Naive thymus-derived CD8-positive, alpha-beta T cell (primary cell): ENCODE measurements at regions of chr19 and their contacts with region 1.

Region 1: DNA sequence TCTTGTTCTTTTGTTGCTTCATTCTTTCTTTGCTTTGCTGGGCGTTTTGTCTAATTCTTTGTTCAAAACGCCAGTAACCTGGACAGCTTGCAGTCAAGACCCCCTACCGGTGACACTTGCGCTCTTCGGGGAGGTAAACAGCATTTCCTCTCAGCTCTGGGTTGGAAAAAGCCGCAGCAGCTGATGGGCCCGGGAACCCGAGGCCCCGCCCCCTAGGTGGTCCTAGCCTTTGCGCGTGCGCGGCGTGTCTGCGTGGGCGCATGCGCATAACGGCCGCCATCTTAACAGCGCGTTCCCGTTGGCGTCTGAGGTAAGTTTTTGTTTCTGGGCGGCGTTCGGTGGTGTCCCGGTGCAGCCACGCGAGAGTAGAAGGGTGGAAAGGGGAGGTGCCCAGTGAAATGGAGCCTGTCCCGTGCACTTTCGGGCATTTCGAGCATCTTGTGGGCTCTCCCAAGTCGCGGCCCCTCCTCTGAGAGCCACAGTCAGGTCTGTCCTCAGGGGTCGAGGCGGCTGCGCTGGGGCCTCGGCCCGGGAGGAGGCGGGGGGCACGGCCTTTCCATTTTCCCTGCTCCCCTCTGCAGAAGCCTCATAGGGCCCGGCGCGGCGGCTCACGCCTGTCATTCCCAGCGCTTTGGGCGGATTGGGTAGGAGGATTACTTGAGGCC is at the start of gene ZNF559:
- DNase-seq: peak; percentile 95 to 99 (median 98)
- ATAC-seq: peak; percentile 96
- H3K4me3 Mint-ChIP-seq: peak within 1 kb of the TSS; percentile 90 to 98 (median 94)
- H3K27ac Mint-ChIP-seq: peak within 1 kb of the TSS; percentile 93 to 98 (median 96)
- H3K4me1 Mint-ChIP-seq: peaks cover 11 to 38% (median 28%) of the 10 kb centered on the region in 4 donors
- H3K27me3 Mint-ChIP-seq: no peaks in the 10 kb centered on the region
- polyA plus RNA-seq, gene ZNF559: 37.2 to 55.4 (median 45.1) TPM

Region 2: DNA sequence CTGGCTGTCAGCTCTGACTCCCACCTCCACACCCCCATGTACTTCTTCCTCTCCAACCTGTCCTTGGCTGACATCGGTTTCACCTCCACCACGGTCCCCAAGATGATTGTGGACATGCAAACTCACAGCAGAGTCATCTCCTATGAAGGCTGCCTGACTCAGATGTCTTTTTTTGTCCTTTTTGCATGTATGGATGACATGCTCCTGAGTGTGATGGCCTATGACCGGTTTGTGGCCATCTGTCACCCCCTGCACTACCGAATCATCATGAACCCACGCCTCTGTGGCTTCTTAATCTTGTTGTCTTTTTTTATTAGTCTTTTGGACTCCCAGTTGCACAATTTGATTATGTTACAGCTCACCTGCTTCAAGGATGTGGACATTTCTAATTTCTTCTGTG is 72.8 kb before region 1 on chr19:
- POLR2A ChIA-PET with region 1: no interaction called
- DNase-seq: no peak
- ATAC-seq: no peak
- H3K4me3 Mint-ChIP-seq: no peak overlapping the region
- H3K27ac Mint-ChIP-seq: no peak overlapping the region
- H3K4me1 Mint-ChIP-seq: no peaks in the 10 kb centered on the region
- H3K27me3 Mint-ChIP-seq: peaks cover 8 to 30% (median 13%) of the 10 kb centered on the region in 5 donors

Region 3: GRCh38 chr19:9309139-9309973 is 14.7 kb before region 1 on chr19 and contains the start of gene ZNF699:
- POLR2A ChIA-PET with region 1: interaction called, 32 read pairs
- DNase-seq: peak; percentile 96 to 100 (median 98)
- ATAC-seq: peak; percentile 86 to 90
- H3K4me3 Mint-ChIP-seq: peak within 1 kb of the TSS; percentile 92 to 98 (median 95)
- H3K27ac Mint-ChIP-seq: peak within 1 kb of the TSS; percentile 89 to 99 (median 96)
- H3K4me1 Mint-ChIP-seq: peaks cover 6 to 43% (median 34%) of the 10 kb centered on the region in 4 donors
- H3K27me3 Mint-ChIP-seq: peaks cover 0 to 2% (median 0%) of the 10 kb centered on the region in 5 donors
- polyA plus RNA-seq, gene ZNF699: 6.9 to 30.0 (median 8.8) TPM

Region 4: GRCh38 chr19:9435279-9436268 is 111.5 kb after region 1 on chr19 and contains the start of gene ZNF266:
- POLR2A ChIA-PET with region 1: interaction called, 11 read pairs
- DNase-seq: peak; percentile 86 to 96 (median 92)
- ATAC-seq: peak; percentile 89
- H3K4me3 Mint-ChIP-seq: peak within 1 kb of the TSS; percentile 91 to 98 (median 96)
- H3K27ac Mint-ChIP-seq: peak within 1 kb of the TSS; percentile 97 to 100 (median 98)
- H3K4me1 Mint-ChIP-seq: peaks cover 19 to 51% (median 51%) of the 10 kb centered on the region in 4 donors
- H3K27me3 Mint-ChIP-seq: no peaks in the 10 kb centered on the region
- polyA plus RNA-seq, gene ZNF266: 15.5 to 18.8 (median 17.7) TPM

Region 5: GRCh38 chr19:9474975-9475374 is 150.9 kb after region 1 on chr19:
- POLR2A ChIA-PET with region 1: no interaction called
- DNase-seq: no peak
- ATAC-seq: no peak
- H3K4me3 Mint-ChIP-seq: no peak overlapping the region
- H3K27ac Mint-ChIP-seq: no peak overlapping the region
- H3K4me1 Mint-ChIP-seq: no peaks in the 10 kb centered on the region
- H3K27me3 Mint-ChIP-seq: peaks cover 0 to 7% (median 3%) of the 10 kb centered on the region in 5 donors